GM18951 (cell line): ENCODE measurements at regions of chr12 and their contacts with region 1.

Region 1: GRCh38 chr12:9039397-9039977 is 50.1 kb downstream of the KLRG1 start:
- POLR2A ChIP-seq: no peak

Region 2: GRCh38 chr12:8544295-8544694 is 495.2 kb before region 1 on chr12:
- in situ Hi-C with region 1: loop called (anchors 25 kb)
- POLR2A ChIP-seq: no peak

Region 3: GRCh38 chr12:8949342-8950220 is 89.9 kb before region 1 on chr12 and contains the start of gene M6PR:
- in situ Hi-C with region 1: loop called (anchors 10 kb)
- POLR2A ChIP-seq: peak; percentile 92